ENCODE measurements at regions of chr9 and their contacts with region 1.

Region 1: GRCh38 chr9:37465249-37466036 is at the start of gene ZBTB5:
- DNase-seq: peak; percentile 99
- ATAC-seq: peak; percentile 85
- H3K4me3 Mint-ChIP-seq: peak within 1 kb of the TSS; percentile 97
- H3K27ac Mint-ChIP-seq: peak within 1 kb of the TSS; percentile 96
- H3K4me1 Mint-ChIP-seq: peaks cover 30% of the 10 kb centered on the region
- H3K27me3 Mint-ChIP-seq: no peaks in the 10 kb centered on the region
- total RNA-seq, gene ZBTB5: 8.0 to 9.1 TPM

Region 2: DNA sequence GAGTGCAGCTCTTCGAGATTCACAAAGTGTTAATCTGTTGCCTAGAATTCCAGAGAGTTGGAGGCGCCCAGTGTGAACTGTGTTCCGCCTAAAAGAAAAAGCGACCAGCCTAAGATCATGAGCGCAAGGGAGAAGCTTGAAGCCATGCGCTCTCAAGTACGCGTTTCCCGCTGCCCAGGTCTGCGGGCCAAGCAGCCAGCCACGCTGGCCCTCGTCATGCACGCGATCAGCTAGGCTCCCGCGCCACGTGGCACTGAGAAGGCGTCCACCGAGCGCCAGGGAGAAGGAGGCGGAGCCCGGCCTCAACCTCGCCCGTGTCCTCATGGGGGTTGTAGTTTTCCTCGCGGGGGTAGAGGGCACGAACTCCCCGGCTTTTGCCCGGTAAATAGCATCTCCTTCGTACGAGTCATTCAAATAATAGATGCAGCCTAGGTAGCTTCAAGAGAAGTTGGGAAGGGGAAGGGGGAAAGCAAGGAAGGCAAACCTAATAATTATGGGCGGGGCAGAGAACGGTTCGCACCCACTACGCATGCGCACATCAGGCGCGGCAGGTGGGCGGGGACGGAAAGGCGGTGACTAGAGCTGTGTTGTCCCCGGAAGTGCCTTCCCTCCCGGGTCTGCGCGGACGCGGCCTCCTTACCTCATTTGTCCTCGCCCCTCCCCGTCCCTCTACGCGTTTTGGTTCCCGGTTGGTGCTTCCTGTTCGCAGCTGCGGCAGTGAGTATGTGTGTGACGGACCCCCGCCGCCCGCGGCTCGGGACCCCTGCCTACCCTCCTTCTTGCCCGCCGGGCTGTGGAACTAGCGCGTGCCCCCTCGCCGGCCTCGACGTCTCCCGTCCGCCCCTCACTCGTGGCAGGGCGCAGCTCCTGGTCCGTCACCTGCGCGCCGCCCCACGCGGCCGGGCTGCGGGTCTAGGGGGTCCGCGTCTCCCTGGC is 345.3 kb before region 1 on chr9 and contains the start of gene ZCCHC7:
- CTCF ChIA-PET with region 1: no interaction called
- POLR2A ChIA-PET with region 1: no interaction called
- intact Hi-C with region 1: loop called in 1 of 2 experiments (anchors 1 kb)
- DNase-seq: peak; percentile 98
- ATAC-seq: peak; percentile 98
- H3K4me3 Mint-ChIP-seq: peak within 1 kb of the TSS; percentile 80
- H3K27ac Mint-ChIP-seq: peak within 1 kb of the TSS; percentile 96
- H3K4me1 Mint-ChIP-seq: peaks cover 31% of the 10 kb centered on the region
- H3K27me3 Mint-ChIP-seq: no peaks in the 10 kb centered on the region
- total RNA-seq, gene ZCCHC7: 29.9 to 50.2 TPM

Region 3: DNA sequence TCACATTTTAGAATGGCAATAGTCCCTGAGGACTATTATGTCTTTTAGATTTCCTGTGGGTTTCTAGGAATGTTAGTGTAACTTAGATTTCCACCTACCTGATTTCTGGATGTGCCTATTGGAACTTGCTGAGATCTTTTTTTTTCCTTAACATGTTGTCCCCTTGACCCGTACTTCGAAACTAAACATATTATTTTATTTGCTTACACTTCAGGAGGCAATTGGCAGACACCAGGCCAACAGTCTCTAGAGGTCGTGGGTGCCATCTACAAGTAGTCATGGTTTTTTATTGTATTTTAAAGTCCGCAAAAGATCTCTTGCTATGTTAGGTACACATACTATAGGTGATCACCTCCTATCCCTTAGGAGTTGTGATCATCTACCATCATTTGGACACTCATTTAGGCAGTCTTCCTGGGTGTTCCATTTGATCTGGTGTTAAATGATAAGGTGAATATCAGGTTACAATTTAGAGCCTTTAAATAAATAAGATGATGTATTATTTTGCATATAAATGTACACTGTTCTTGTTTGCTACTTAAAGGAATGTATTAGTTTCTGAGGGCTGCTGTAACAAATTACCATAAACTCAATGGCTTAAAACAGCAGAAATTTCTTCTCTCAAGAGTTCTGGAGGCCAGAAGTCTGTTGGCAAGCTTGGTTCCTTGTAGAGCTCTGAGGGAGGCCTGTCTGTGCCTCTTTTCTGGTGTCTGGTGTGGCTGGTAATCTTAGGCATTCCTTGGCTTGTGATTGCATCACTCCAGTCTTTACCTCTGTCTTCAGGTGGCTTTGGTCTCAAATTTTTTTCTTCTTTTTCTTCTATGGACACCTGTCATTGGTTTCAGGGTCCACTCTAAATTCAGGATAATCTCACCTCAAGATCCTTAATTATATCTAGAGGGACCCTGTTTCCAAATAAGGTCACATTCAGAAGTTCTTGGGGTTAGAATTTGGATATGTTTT is 280.3 kb before region 1 on chr9:
- CTCF ChIA-PET with region 1: no interaction called
- POLR2A ChIA-PET with region 1: no interaction called
- intact Hi-C with region 1: no loop called
- DNase-seq: no peak
- ATAC-seq: no peak
- H3K4me3 Mint-ChIP-seq: no peak overlapping the region
- H3K27ac Mint-ChIP-seq: no peak overlapping the region
- H3K4me1 Mint-ChIP-seq: peaks cover 38% of the 10 kb centered on the region
- H3K27me3 Mint-ChIP-seq: no peaks in the 10 kb centered on the region

Region 4: GRCh38 chr9:37422289-37423104 is 42.9 kb before region 1 on chr9 and contains the start of gene GRHPR:
- CTCF ChIA-PET with region 1: no interaction called
- POLR2A ChIA-PET with region 1: interaction called, 3 read pairs
- intact Hi-C with region 1: loop called (anchors 1 kb)
- DNase-seq: peak; percentile 95
- ATAC-seq: peak; percentile 99
- H3K4me3 Mint-ChIP-seq: peak within 1 kb of the TSS; percentile 91
- H3K27ac Mint-ChIP-seq: peak within 1 kb of the TSS; percentile 95
- H3K4me1 Mint-ChIP-seq: peaks cover 25% of the 10 kb centered on the region
- H3K27me3 Mint-ChIP-seq: no peaks in the 10 kb centered on the region
- total RNA-seq, gene GRHPR: 69.1 to 74.4 TPM

Region 5: DNA sequence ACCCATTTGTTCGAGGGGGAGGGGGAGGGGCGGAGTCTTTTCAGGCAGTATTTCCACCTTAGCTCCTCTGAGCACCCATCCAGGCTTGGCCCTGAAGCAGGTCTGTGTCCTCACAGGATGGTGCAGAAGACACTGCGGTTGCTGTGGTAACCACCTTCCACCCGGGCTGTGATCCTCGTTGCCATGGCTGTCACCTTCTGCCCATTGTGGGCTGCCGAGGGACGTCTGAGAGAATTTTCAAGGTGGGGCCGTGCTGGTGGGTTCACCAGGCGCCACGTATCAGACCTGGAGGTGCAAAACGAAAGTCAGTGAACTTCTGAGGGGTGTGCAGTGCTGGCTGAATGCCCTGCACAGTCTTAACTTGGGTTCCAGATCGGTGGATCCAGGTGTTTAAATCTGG is 47.0 kb after region 1 on chr9:
- CTCF ChIA-PET with region 1: no interaction called
- POLR2A ChIA-PET with region 1: no interaction called
- intact Hi-C with region 1: no loop called
- DNase-seq: no peak
- ATAC-seq: no peak
- H3K4me3 Mint-ChIP-seq: no peak overlapping the region
- H3K27ac Mint-ChIP-seq: peak overlapping the region; percentile 39
- H3K4me1 Mint-ChIP-seq: no peaks in the 10 kb centered on the region
- H3K27me3 Mint-ChIP-seq: no peaks in the 10 kb centered on the region

Region 6: DNA sequence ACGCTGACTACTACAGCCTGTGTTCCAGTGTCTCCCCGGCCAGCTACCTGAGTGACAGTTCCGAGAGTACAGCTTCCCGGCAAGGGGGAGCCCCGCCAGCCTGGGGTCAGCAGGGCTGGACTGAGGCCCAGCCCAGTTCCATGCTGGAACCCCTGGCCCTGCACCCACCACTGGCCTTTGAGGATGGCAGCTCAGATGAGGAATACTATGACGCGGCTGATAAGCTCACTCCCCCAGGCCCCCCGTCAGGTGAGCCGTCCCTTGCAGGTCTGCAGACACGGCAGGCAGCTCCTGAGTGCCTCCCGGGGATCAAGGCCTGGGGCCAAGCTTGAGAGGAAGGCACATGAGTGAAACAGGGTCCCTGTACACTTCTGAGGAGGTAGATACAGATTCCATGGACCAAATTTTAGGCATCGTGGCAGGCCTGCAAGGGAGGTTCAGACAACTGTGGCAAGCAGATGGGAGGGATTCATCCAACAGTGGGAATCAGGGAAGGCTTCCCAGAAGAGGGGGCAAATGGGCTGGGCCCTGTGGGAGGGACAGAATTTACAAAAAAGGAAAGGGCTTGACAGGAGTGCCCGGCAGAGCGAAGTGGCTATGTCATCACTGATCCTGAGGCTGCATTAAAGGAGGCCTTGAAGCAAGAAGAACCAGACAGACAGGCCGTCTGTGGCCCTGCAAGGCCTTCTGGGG is 275.3 kb after region 1 on chr9:
- CTCF ChIA-PET with region 1: no interaction called
- POLR2A ChIA-PET with region 1: no interaction called
- intact Hi-C with region 1: no loop called
- DNase-seq: no peak
- ATAC-seq: no peak
- H3K4me3 Mint-ChIP-seq: no peak overlapping the region
- H3K27ac Mint-ChIP-seq: no peak overlapping the region
- H3K4me1 Mint-ChIP-seq: no peaks in the 10 kb centered on the region
- H3K27me3 Mint-ChIP-seq: peaks cover 2% of the 10 kb centered on the region

Region 7: GRCh38 chr9:37800631-37801286 is 335.3 kb after region 1 on chr9 and contains the start of gene DCAF10:
- CTCF ChIA-PET with region 1: no interaction called
- POLR2A ChIA-PET with region 1: no interaction called
- intact Hi-C with region 1: loop called in 1 of 2 experiments (anchors 1 kb)
- DNase-seq: peak; percentile 92
- ATAC-seq: peak; percentile 78
- H3K4me3 Mint-ChIP-seq: peak within 1 kb of the TSS; percentile 90
- H3K27ac Mint-ChIP-seq: peak within 1 kb of the TSS; percentile 89
- H3K4me1 Mint-ChIP-seq: peaks cover 35% of the 10 kb centered on the region
- H3K27me3 Mint-ChIP-seq: no peaks in the 10 kb centered on the region
- total RNA-seq, gene DCAF10: 13.9 to 15.4 TPM

Measured in activated CD4-positive, alpha-beta T cell treated with anti-CD3 and anti-CD28 coated beads for 36 hours (primary cell).